Ovary (tissue), 10 donors: ENCODE measurements at regions of chr12 and their contacts with region 1.

Region 1: GRCh38 chr12:11581179-11581755 is 68.2 kb upstream of the ETV6 start:
- DNase-seq: peak; percentile 48 to 75 (median 61)
- H3K4me3 ChIP-seq: no peak overlapping the region
- H3K27ac ChIP-seq: no peak overlapping the region
- H3K4me1 ChIP-seq: peaks cover 3% of the 10 kb centered on the region
- H3K27me3 ChIP-seq: no peaks in the 10 kb centered on the region
- CTCF ChIP-seq: peak; percentile 63 to 73 (median 67)
- EP300 ChIP-seq: no peak
- POLR2A ChIP-seq: no peak

Region 2: GRCh38 chr12:11545484-11546330 is 35.6 kb before region 1 on chr12:
- intact Hi-C with region 1: no loop called
- DNase-seq: no peak
- H3K4me3 ChIP-seq: no peak overlapping the region
- H3K27ac ChIP-seq: no peak overlapping the region
- H3K4me1 ChIP-seq: peaks cover 4% of the 10 kb centered on the region
- H3K27me3 ChIP-seq: no peaks in the 10 kb centered on the region
- CTCF ChIP-seq: no peak
- EP300 ChIP-seq: no peak
- POLR2A ChIP-seq: no peak

Region 3: GRCh38 chr12:11785712-11786111 is 204.4 kb after region 1 on chr12:
- intact Hi-C with region 1: no loop called
- DNase-seq: no peak
- H3K4me3 ChIP-seq: no peak overlapping the region
- H3K27ac ChIP-seq: no peak overlapping the region
- H3K4me1 ChIP-seq: no peaks in the 10 kb centered on the region
- H3K27me3 ChIP-seq: no peaks in the 10 kb centered on the region
- CTCF ChIP-seq: no peak
- EP300 ChIP-seq: no peak
- POLR2A ChIP-seq: no peak

Region 4: GRCh38 chr12:11885261-11886038 is 304.2 kb after region 1 on chr12:
- intact Hi-C with region 1: loop called in 1 of 4 experiments (anchors 10 kb)
- DNase-seq: no peak
- H3K4me3 ChIP-seq: no peak overlapping the region
- H3K27ac ChIP-seq: no peak overlapping the region
- H3K4me1 ChIP-seq: no peaks in the 10 kb centered on the region
- H3K27me3 ChIP-seq: no peaks in the 10 kb centered on the region
- CTCF ChIP-seq: no peak
- EP300 ChIP-seq: no peak
- POLR2A ChIP-seq: no peak

Region 5: DNA sequence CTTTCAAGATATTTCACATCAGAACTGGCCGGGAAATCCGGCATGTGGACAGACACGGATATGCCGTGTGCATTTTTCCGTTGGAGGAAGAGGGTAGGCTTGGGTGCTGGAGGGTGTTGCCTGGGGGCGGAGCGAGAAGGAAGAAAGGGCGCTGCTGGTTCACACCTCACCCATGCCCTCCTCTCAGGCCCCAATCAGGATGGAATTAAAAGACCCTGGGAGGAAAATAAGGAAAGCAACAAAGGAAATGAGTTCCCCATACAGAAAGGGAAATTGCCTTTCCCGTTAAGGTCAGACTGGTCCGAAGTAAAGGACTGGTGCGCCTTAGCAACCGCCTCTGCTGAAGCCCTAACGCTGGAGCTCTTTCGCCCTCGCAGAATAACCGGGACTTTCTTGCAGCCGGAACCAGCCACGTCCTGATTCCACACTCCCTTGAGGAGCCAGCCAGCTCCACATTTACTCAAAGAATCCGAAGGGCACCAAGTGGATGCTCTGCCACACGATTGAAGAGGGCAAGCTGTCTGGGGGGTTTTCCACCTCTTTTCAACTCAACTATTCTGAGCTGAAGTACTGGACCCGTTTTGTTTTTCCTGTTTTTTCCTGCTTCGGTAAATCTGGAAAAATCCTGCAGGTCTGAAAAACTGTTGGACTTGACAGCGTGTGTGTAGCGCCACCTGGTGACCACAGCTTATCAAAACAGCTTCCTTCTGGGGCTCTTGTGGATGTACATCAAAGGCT is 451.8 kb after region 1 on chr12:
- intact Hi-C with region 1: loop called (anchors 2 to 5 kb)
- DNase-seq: peak; percentile 64 to 89 (median 81)
- H3K4me3 ChIP-seq: peak overlapping the region; percentile 33
- H3K27ac ChIP-seq: peak overlapping the region in 1 of 2 donors; percentile 67
- H3K4me1 ChIP-seq: no peaks in the 10 kb centered on the region
- H3K27me3 ChIP-seq: no peaks in the 10 kb centered on the region
- CTCF ChIP-seq: peak; percentile 77 to 91 (median 90)
- EP300 ChIP-seq: no peak
- POLR2A ChIP-seq: no peak

Region 6: GRCh38 chr12:12334367-12335040 is 753.2 kb after region 1 on chr12:
- intact Hi-C with region 1: loop called in 1 of 4 experiments (anchors 10 kb)
- DNase-seq: peak in 4 of 5 donors; percentile 35 to 50 (median 42)
- H3K4me3 ChIP-seq: no peak overlapping the region
- H3K27ac ChIP-seq: no peak overlapping the region
- H3K4me1 ChIP-seq: peaks cover 4% of the 10 kb centered on the region
- H3K27me3 ChIP-seq: no peaks in the 10 kb centered on the region
- CTCF ChIP-seq: peak in 2 of 3 donors; percentile 41 to 48
- EP300 ChIP-seq: no peak
- POLR2A ChIP-seq: no peak